Astrocyte of the cerebellum (primary cell): ENCODE measurements at regions of chr4 and their contacts with region 1.

Region 1: DNA sequence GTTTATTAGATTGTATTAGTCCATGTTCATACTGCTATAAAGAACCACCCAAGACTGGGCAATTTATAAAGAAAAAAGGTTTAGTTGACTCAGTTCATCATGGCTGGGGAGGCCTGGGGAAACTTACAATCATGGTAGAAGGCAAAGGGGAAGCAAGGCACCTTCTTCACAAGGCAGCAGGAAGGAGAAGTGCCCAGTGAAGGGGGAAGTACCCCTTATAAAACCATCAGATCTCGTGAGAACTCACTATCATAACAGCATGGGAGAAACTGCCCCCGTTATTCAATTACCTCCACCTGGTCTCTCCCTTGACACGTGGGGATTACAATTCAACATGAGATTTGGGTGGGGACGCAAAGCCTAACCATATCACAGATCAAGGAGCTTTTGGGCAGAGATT is 8.1 kb upstream of the HSD17B13 start:
- DNase-seq: no peak
- H3K4me3 ChIP-seq: no peak overlapping the region
- CTCF ChIP-seq: no peak

Region 2: GRCh38 chr4:87370068-87370467 is 39.3 kb after region 1 on chr4:
- in situ Hi-C with region 1: loop called (anchors 5 kb)
- DNase-seq: no peak
- H3K4me3 ChIP-seq: no peak overlapping the region
- CTCF ChIP-seq: no peak